H1 (cell line): ENCODE measurements at regions of chr19 and their contacts with region 1.

Region 1: GRCh38 chr19:1269065-1269477 is at the start of gene CIRBP:
- DNase-seq: peak; percentile 94 to 97
- H3K4me3 ChIP-seq: peak within 1 kb of the TSS; percentile 74 to 95 (median 90)
- H3K27ac ChIP-seq: peak within 1 kb of the TSS; percentile 98
- H3K4me1 ChIP-seq: peaks cover 4 to 54% (median 37%) of the 10 kb centered on the region in 4 experiments
- H3K27me3 ChIP-seq: peaks cover 0 to 10% (median 5%) of the 10 kb centered on the region in 4 experiments; a peak in 4 of 7 replicates
- CTCF ChIP-seq: no peak
- EP300 ChIP-seq: 0 out of 3 replicates have a peak, but pooled peaks of 1 of the 2 experiments have one; percentile 30
- POLR2A ChIP-seq: peak; percentile 100
- RAD21 ChIP-seq: no peak
- total RNA-seq, gene CIRBP: 175 TPM in 2 replicates

Region 2: DNA sequence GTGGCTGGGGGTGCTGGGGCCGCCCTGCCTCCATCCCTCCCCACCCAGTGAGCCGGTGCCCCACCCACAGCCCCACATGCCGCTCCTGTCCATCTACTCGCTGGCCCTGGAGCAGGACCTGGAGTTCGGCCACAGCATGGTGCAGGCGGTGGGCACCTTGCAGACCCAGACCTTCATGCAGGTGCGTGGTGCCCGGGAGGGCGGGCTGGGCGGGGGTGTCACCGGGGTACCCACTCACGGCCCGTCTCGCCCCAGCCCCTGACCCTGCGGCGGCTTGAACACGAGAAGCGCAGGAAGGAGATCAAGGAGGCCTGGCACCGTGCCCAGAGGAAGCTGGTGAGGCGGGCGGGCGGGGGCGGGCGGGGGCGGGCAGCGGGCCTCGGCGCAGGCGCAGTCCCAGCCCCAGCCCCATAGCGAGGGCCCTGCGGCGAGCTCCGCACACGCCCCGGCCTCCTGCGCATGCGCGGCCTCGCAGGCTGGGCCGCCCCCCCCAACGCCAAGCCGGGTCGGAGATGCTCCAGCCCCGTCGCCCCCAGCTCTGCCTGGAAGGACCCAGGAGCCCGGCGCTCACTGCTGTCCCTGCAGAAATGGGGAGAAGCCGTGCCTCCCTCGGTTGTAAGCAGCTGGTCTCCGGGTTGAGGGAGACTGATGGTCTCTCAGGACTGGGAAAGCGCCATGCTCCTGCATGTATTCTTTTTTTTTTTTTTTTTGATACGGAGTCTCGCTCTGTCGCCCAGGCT is 194.4 kb before region 1 on chr19:
- CTCF ChIA-PET with region 1: no interaction called
- POLR2A ChIA-PET with region 1: interaction called, 10 read pairs
- DNase-seq: no peak
- H3K4me3 ChIP-seq: no peak overlapping the region
- H3K27ac ChIP-seq: no peak overlapping the region
- H3K4me1 ChIP-seq: peaks cover 0 to 4% (median 1%) of the 10 kb centered on the region in 4 experiments; a peak in 2 of 7 replicates
- H3K27me3 ChIP-seq: peaks cover 0 to 4% (median 2%) of the 10 kb centered on the region in 4 experiments; a peak in 2 of 7 replicates
- CTCF ChIP-seq: no peak
- EP300 ChIP-seq: no peak
- POLR2A ChIP-seq: no peak
- RAD21 ChIP-seq: no peak

Region 3: GRCh38 chr19:1252821-1253513 is 16.1 kb before region 1 on chr19:
- CTCF ChIA-PET with region 1: interaction called, 42 read pairs
- POLR2A ChIA-PET with region 1: interaction called, 456 read pairs
- DNase-seq: no peak
- H3K4me3 ChIP-seq: peak overlapping the region in 1 of 4 experiments; percentile 99; a peak in 2 of 8 replicates
- H3K27ac ChIP-seq: no peak overlapping the region
- H3K4me1 ChIP-seq: peaks cover 0 to 17% (median 12%) of the 10 kb centered on the region in 4 experiments; a peak in 6 of 7 replicates
- H3K27me3 ChIP-seq: no peaks in the 10 kb centered on the region; a peak in 1 of 7 replicates
- CTCF ChIP-seq: no peak
- EP300 ChIP-seq: no peak
- POLR2A ChIP-seq: no peak
- RAD21 ChIP-seq: no peak

Region 4: GRCh38 chr19:1307320-1307719 is 38.2 kb after region 1 on chr19:
- CTCF ChIA-PET with region 1: interaction called, 4 read pairs
- POLR2A ChIA-PET with region 1: interaction called, 18 read pairs
- DNase-seq: no peak
- H3K4me3 ChIP-seq: no peak overlapping the region
- H3K27ac ChIP-seq: no peak overlapping the region
- H3K4me1 ChIP-seq: peaks cover 0 to 4% (median 0%) of the 10 kb centered on the region in 4 experiments; a peak in 1 of 7 replicates
- H3K27me3 ChIP-seq: no peaks in the 10 kb centered on the region
- CTCF ChIP-seq: no peak
- EP300 ChIP-seq: no peak
- POLR2A ChIP-seq: no peak
- RAD21 ChIP-seq: no peak

Region 5: DNA sequence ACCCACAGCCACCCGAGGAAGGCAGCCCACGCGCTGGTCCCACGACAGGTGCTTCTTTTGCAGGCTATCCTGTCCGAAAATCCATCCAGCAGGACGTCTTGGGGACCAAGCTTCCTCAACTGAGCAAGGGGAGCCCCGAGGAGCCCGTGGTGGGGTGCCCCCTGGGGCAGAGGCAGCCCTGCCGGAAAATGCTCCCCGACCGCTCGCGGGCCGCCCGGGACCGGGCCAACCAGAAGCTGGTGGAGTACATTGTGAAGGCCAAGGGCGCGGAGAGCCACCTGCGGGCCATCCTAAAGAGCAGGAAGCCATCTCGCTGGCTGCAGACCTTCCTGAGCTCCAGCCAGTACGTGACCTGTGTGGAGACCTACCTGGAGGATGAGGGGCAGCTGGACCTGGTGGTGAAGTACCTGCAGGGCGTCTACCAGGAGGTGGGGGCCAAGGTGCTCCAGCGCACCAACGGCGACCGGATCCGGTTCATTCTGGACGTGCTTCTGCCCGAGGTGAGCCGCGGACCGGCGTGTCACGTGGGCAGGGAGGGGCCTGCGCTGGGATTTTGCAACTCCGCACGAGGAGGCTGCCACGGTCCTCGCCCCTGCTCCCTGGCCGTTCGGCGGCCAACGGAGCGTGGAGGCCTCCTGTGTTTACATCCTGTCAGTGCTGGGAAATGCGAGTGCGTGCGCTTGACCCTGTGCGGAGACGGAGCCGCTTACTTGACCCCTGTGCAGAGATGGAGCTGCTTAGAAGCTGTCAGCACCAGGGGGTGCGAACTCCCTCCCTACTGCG is 101.7 kb after region 1 on chr19:
- CTCF ChIA-PET with region 1: interaction called, 3 read pairs
- POLR2A ChIA-PET with region 1: interaction called, 10 read pairs
- DNase-seq: no peak
- H3K4me3 ChIP-seq: no peak overlapping the region
- H3K27ac ChIP-seq: no peak overlapping the region
- H3K4me1 ChIP-seq: no peaks in the 10 kb centered on the region
- H3K27me3 ChIP-seq: no peaks in the 10 kb centered on the region
- CTCF ChIP-seq: no peak
- EP300 ChIP-seq: no peak
- POLR2A ChIP-seq: no peak
- RAD21 ChIP-seq: no peak

Region 6: DNA sequence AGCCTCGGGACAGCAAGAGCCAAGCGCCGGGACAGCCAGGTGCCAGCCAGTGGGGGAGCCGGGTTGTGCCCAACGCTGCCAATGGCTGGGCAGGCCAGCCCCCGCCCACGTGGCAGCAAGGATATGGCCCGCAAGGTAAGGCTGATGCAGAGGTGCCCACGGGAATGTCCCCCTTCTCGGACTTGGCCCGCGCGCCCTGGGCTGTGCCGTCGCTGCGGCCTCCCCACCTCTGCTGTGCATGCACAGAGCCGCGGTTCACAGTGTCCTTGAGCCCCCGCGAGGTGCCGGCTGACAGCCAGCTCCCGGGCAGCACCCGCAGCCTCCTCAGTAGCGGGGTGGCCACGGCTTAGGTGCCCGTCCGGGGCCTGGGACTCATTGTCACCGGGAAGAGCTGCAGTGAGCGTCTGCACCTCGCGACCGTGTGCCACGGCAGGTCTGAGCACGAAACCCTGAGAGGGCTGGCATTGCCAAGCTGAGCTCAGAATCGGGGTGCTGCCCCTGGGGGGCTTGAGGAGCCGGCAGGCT is 159.9 kb after region 1 on chr19:
- CTCF ChIA-PET with region 1: no interaction called
- POLR2A ChIA-PET with region 1: no interaction called
- DNase-seq: no peak
- H3K4me3 ChIP-seq: no peak overlapping the region
- H3K27ac ChIP-seq: no peak overlapping the region
- H3K4me1 ChIP-seq: no peaks in the 10 kb centered on the region; a peak in 1 of 7 replicates
- H3K27me3 ChIP-seq: no peaks in the 10 kb centered on the region
- CTCF ChIP-seq: no peak
- EP300 ChIP-seq: no peak
- POLR2A ChIP-seq: no peak
- RAD21 ChIP-seq: no peak

Region 7: DNA sequence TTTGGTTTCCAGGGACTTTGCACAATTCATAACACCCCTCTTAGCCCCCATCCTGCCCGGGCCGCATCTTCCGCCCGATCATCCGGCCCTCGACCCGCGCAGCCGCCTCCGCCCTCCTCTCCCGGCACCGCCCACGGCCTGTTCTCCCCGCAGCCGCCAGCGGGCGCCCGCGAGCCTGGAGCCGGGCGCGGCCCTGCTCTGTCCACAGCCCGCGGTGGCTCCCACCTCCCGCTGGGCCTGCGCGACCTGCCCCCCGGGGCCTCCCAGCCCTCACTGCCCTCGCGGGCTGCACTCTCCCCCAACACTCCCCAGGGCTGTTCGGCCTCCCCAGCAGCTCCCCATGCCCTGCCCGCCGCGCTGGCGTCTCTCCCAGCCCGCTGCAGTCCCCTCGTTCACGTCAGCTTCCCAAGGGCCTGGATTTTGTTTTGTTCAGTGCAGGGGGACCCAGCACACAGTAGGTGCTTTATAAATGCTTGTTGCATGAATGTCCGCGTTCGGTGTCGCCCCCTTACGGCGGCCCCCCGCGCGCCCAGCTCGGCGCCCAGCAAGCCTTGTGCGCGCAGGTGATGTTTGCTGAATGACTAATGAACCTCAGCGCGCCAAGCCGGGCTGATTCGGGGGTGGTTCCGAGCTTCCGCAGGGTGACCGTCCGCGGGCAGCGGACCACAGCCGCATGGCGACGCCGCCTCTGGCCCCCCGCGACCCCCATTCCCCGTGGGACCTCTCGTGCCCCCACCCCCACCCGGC is 176.3 kb after region 1 on chr19:
- CTCF ChIA-PET with region 1: interaction called, 5 read pairs
- POLR2A ChIA-PET with region 1: interaction called, 20 read pairs
- DNase-seq: peak in 1 of 2 experiments; percentile 95
- H3K4me3 ChIP-seq: peak overlapping the region; percentile 49 to 74 (median 66)
- H3K27ac ChIP-seq: no peak overlapping the region
- H3K4me1 ChIP-seq: peaks cover 0 to 18% (median 7%) of the 10 kb centered on the region in 4 experiments; a peak in 5 of 7 replicates
- H3K27me3 ChIP-seq: peaks cover 26 to 41% (median 38%) of the 10 kb centered on the region in 4 experiments
- CTCF ChIP-seq: peak; percentile 78 to 94 (median 87)
- EP300 ChIP-seq: no peak
- POLR2A ChIP-seq: no peak
- RAD21 ChIP-seq: peak; percentile 36 to 55; a peak in 3 of 4 replicates